ENCODE measurements at regions of chr1 and their contacts with region 1.

Region 1: GRCh38 chr1:168439456-168440375 is 104.1 kb downstream of the XCL2 start:
- DNase-seq: peak; percentile 71 to 92
- ATAC-seq: peak; percentile 89 to 96 (median 95)
- H3K4me3 ChIP-seq: peak overlapping the region; percentile 15
- H3K4me3 Mint-ChIP-seq: peak overlapping the region; percentile 79
- H3K27ac ChIP-seq: peak overlapping the region; percentile 22
- H3K27ac Mint-ChIP-seq: peak overlapping the region; percentile 53 to 81
- H3K4me1 ChIP-seq: peaks cover 40% of the 10 kb centered on the region
- H3K4me1 Mint-ChIP-seq: peaks cover 59 to 63% of the 10 kb centered on the region in 2 donors
- H3K27me3 ChIP-seq: no peaks in the 10 kb centered on the region
- H3K27me3 Mint-ChIP-seq: peaks cover 0 to 5% of the 10 kb centered on the region in 2 donors
- CTCF ChIP-seq: peak; percentile 82

Region 2: GRCh38 chr1:168243636-168244212 is 196.0 kb before region 1 on chr1:
- intact Hi-C with region 1: no loop called
- DNase-seq: no peak
- ATAC-seq: peak; percentile 46 to 81 (median 59)
- H3K4me3 ChIP-seq: no peak overlapping the region
- H3K4me3 Mint-ChIP-seq: peak overlapping the region; percentile 35
- H3K27ac ChIP-seq: no peak overlapping the region
- H3K27ac Mint-ChIP-seq: peak overlapping the region in 1 of 2 donors; percentile 80
- H3K4me1 ChIP-seq: peaks cover 15% of the 10 kb centered on the region
- H3K4me1 Mint-ChIP-seq: peaks cover 45 to 51% of the 10 kb centered on the region in 2 donors
- H3K27me3 ChIP-seq: no peaks in the 10 kb centered on the region
- H3K27me3 Mint-ChIP-seq: no peaks in the 10 kb centered on the region
- CTCF ChIP-seq: no peak

Region 3: GRCh38 chr1:168321945-168322344 is 117.8 kb before region 1 on chr1:
- intact Hi-C with region 1: no loop called
- DNase-seq: no peak
- ATAC-seq: peak in 1 of 3 donors; percentile 40
- H3K4me3 ChIP-seq: no peak overlapping the region
- H3K4me3 Mint-ChIP-seq: no peak overlapping the region
- H3K27ac ChIP-seq: no peak overlapping the region
- H3K27ac Mint-ChIP-seq: no peak overlapping the region
- H3K4me1 ChIP-seq: peaks cover 6% of the 10 kb centered on the region
- H3K4me1 Mint-ChIP-seq: peaks cover 13 to 26% of the 10 kb centered on the region in 2 donors
- H3K27me3 ChIP-seq: no peaks in the 10 kb centered on the region
- H3K27me3 Mint-ChIP-seq: no peaks in the 10 kb centered on the region
- CTCF ChIP-seq: no peak

Region 4: DNA sequence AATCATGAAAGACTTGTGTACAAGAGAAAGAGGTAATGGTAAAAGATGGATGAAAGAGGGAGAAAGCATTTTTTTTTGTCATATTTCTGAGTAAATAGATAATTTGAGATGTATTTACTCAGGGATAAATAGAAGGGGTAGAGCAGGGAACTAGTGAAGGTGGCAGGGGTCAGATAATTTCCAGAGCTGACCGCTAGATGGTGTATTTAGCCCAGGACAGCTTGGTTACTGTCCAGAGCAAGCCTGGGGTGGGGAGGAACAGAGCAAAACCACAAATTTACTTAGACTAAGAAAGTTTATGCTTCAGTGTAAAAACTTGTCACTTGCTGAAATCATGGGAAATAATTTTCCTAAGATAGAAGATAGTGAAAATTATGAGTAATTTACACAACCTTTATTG is 12.6 kb after region 1 on chr1:
- intact Hi-C with region 1: no loop called
- DNase-seq: no peak
- ATAC-seq: no peak
- H3K4me3 ChIP-seq: no peak overlapping the region
- H3K4me3 Mint-ChIP-seq: no peak overlapping the region
- H3K27ac ChIP-seq: no peak overlapping the region
- H3K27ac Mint-ChIP-seq: peak overlapping the region; percentile 10 to 42
- H3K4me1 ChIP-seq: no peaks in the 10 kb centered on the region
- H3K4me1 Mint-ChIP-seq: peaks cover 18 to 21% of the 10 kb centered on the region in 2 donors
- H3K27me3 ChIP-seq: no peaks in the 10 kb centered on the region
- H3K27me3 Mint-ChIP-seq: no peaks in the 10 kb centered on the region
- CTCF ChIP-seq: no peak

Region 5: DNA sequence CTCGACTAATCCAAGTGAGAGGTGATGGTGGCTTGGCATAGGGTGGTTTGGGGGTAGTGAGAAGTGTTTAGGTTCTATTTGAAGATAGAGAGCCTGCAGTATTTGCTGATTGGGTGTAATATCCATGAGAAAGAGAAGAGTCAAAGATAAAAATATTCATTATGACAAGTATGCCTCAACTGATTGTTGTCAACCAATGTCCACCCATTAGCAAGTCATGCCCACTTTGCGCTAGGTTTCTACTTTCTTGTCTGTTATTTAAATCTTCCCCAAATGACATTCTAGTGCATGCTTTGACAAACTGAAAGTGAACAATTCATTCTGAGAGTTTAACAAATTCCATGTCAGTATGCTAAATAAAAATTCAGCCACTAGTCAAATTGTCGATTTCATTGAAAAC is 132.9 kb after region 1 on chr1:
- intact Hi-C with region 1: loop called (anchors 1 kb)
- DNase-seq: no peak
- ATAC-seq: no peak
- H3K4me3 ChIP-seq: no peak overlapping the region
- H3K4me3 Mint-ChIP-seq: no peak overlapping the region
- H3K27ac ChIP-seq: no peak overlapping the region
- H3K27ac Mint-ChIP-seq: no peak overlapping the region
- H3K4me1 ChIP-seq: peaks cover 6% of the 10 kb centered on the region
- H3K4me1 Mint-ChIP-seq: peaks cover 23 to 28% of the 10 kb centered on the region in 2 donors
- H3K27me3 ChIP-seq: no peaks in the 10 kb centered on the region
- H3K27me3 Mint-ChIP-seq: peaks cover 0 to 7% of the 10 kb centered on the region in 2 donors
- CTCF ChIP-seq: no peak

Region 6: DNA sequence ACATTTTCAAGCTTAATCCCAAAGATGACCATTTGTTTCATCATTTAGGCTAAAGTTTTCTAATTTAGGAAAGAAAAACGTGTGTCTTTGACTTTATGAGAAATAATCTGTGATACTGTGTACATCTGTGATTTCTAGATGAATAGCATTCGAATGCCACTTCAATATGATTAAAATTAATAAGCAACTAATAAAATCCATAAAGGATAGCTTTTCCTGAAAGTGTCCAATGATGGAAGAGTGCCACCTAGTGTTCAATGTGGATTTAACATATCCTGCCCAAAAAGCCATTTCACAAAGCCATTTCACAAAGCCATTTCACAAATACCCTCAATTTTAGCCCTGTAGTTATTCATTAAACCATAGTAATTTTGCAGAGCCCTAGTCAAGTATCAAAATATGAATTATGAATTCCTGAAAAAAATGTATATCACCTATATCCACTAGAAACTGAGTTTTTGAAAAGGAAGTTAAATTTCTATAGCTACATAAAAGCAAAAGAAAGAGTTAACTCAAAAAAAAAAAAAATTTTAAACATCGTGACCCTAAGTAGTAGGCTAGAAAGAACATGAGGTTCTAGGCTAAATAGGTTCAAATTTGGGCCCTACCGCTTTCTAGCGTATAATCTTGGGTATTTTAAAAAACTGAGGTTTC is 908.8 kb after region 1 on chr1:
- intact Hi-C with region 1: loop called (anchors 1 kb)
- DNase-seq: peak in 1 of 2 donors; percentile 82
- ATAC-seq: peak; percentile 50 to 58 (median 57)
- H3K4me3 ChIP-seq: no peak overlapping the region
- H3K4me3 Mint-ChIP-seq: no peak overlapping the region
- H3K27ac ChIP-seq: no peak overlapping the region
- H3K27ac Mint-ChIP-seq: no peak overlapping the region
- H3K4me1 ChIP-seq: no peaks in the 10 kb centered on the region
- H3K4me1 Mint-ChIP-seq: no peaks in the 10 kb centered on the region
- H3K27me3 ChIP-seq: no peaks in the 10 kb centered on the region
- H3K27me3 Mint-ChIP-seq: no peaks in the 10 kb centered on the region
- CTCF ChIP-seq: peak; percentile 88

Measured in natural killer cell (primary cell).